ENCODE measurements at regions of chr2 and their contacts with region 1.

Region 1: DNA sequence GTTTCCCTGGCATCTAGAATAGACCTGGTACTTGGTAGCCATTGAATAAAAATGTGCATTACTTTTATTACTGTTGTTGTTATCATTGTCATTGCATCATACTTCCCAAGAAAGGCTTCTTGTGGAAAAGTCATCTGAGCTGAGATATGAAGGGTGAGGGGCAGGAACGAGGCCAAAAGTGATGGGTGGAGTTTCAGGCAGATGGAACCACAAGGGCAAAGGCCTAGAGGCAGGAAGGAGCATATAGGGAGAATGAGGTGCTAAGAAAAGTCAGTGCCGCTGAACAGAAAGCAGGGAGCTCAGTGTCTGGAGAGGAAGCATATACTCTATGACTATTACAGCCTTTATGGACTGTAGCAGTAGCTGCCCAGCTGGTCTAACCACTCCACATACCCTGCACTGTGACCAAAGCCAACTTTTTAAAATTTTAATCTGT is 219.3 kb downstream of the SPP2 start:
- ATAC-seq: peak in 2 of 8 experiments; percentile 84 to 85
- H3K4me3 ChIP-seq: no peak overlapping the region
- H3K27ac ChIP-seq: no peak overlapping the region
- H3K4me1 ChIP-seq: peaks cover 4 to 7% of the 10 kb centered on the region in 2 donors

Region 2: GRCh38 chr2:234146087-234146826 is 123.5 kb before region 1 on chr2:
- in situ Hi-C with region 1: loop called in 1 of 9 experiments (anchors 10 kb)
- ATAC-seq: peak in 4 of 8 experiments; percentile 21 to 70 (median 48)
- H3K4me3 ChIP-seq: no peak overlapping the region
- H3K27ac ChIP-seq: no peak overlapping the region
- H3K4me1 ChIP-seq: peaks cover 6 to 10% of the 10 kb centered on the region in 2 donors

Region 3: GRCh38 chr2:235087812-235088495 is 818.2 kb after region 1 on chr2:
- in situ Hi-C with region 1: no loop called
- ATAC-seq: peak; percentile 41 to 96 (median 94)
- H3K4me3 ChIP-seq: no peak overlapping the region
- H3K27ac ChIP-seq: peak overlapping the region in 1 of 2 donors; percentile 66
- H3K4me1 ChIP-seq: peaks cover 32 to 35% of the 10 kb centered on the region in 2 donors

Measured in motor neuron (in vitro differentiated cells).